CD4-positive, alpha-beta T cell (primary cell): ENCODE measurements at regions of chr10 and their contacts with region 1.

Region 1: GRCh38 chr10:32338262-32338661 is 8.7 kb downstream of the EPC1 start:
- DNase-seq: no peak
- ATAC-seq: no peak
- H3K4me3 ChIP-seq: no peak overlapping the region
- H3K4me3 Mint-ChIP-seq: peak overlapping the region; percentile 60
- H3K27ac ChIP-seq: no peak overlapping the region
- H3K27ac Mint-ChIP-seq: peak overlapping the region; percentile 87
- H3K4me1 ChIP-seq: peaks cover 49% of the 10 kb centered on the region
- H3K4me1 Mint-ChIP-seq: peaks cover 96% of the 10 kb centered on the region
- H3K27me3 ChIP-seq: no peaks in the 10 kb centered on the region
- H3K27me3 Mint-ChIP-seq: no peaks in the 10 kb centered on the region
- CTCF ChIP-seq: no peak

Region 2: DNA sequence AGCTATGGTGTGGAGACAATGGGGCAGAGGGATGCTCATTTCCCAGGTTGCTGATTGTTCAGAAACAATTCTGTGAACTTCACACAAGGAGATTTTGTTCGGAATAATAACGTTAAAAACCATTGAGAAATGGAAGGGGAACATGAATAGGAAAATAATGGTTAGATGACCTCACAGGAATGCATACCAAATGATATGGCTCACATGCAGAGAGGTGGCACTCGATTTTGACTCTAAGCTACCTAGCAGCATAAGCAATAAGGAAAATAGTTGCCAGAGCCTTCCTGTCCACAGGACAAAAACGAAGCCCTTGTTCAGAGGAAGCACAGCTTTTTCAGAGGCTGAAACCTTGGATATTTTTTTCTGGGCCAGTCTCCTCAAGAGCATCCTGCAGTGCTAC is 726.2 kb before region 1 on chr10:
- CTCF ChIA-PET with region 1: no interaction called
- POLR2A ChIA-PET with region 1: no interaction called
- intact Hi-C with region 1: no loop called
- DNase-seq: no peak
- ATAC-seq: no peak
- H3K4me3 ChIP-seq: no peak overlapping the region
- H3K4me3 Mint-ChIP-seq: no peak overlapping the region
- H3K27ac ChIP-seq: no peak overlapping the region
- H3K27ac Mint-ChIP-seq: no peak overlapping the region
- H3K4me1 ChIP-seq: no peaks in the 10 kb centered on the region
- H3K4me1 Mint-ChIP-seq: no peaks in the 10 kb centered on the region
- H3K27me3 ChIP-seq: peaks cover 0 to 6% of the 10 kb centered on the region in 2 experiments
- H3K27me3 Mint-ChIP-seq: peaks cover 20% of the 10 kb centered on the region
- CTCF ChIP-seq: no peak

Region 3: GRCh38 chr10:32308027-32308603 is 30.1 kb before region 1 on chr10:
- CTCF ChIA-PET with region 1: interaction called, 5 read pairs
- POLR2A ChIA-PET with region 1: interaction called, 3 read pairs
- intact Hi-C with region 1: loop called in 1 of 2 experiments (anchors 5 kb)
- DNase-seq: peak in 4 of 14 experiments; percentile 9 to 48 (median 36)
- ATAC-seq: peak; percentile 70
- H3K4me3 ChIP-seq: no peak overlapping the region
- H3K4me3 Mint-ChIP-seq: peak overlapping the region; percentile 76
- H3K27ac ChIP-seq: peak overlapping the region; percentile 2 to 5
- H3K27ac Mint-ChIP-seq: peak overlapping the region; percentile 80
- H3K4me1 ChIP-seq: peaks cover 18% of the 10 kb centered on the region
- H3K4me1 Mint-ChIP-seq: peaks cover 85% of the 10 kb centered on the region
- H3K27me3 ChIP-seq: no peaks in the 10 kb centered on the region
- H3K27me3 Mint-ChIP-seq: no peaks in the 10 kb centered on the region
- CTCF ChIP-seq: no peak